T-cell (primary cell): ENCODE measurements at regions of chr2 and their contacts with region 1.

Region 1: GRCh38 chr2:201231781-201232466 is 28.4 kb upstream of the CASP8 start:
- DNase-seq: peak; percentile 75 to 97 (median 88)
- ATAC-seq: peak; percentile 53 to 56 (median 54)
- H3K4me3 ChIP-seq: no peak overlapping the region
- H3K4me3 Mint-ChIP-seq: peak overlapping the region; percentile 57 to 94 (median 89)
- H3K27ac ChIP-seq: peak overlapping the region; percentile 81
- H3K27ac Mint-ChIP-seq: peak overlapping the region; percentile 72 to 93
- H3K4me1 ChIP-seq: peaks cover 40 to 43% of the 10 kb centered on the region in 2 experiments
- H3K4me1 Mint-ChIP-seq: peaks cover 44 to 60% (median 56%) of the 10 kb centered on the region in 3 donors
- H3K27me3 ChIP-seq: no peaks in the 10 kb centered on the region
- H3K27me3 Mint-ChIP-seq: no peaks in the 10 kb centered on the region

Region 2: DNA sequence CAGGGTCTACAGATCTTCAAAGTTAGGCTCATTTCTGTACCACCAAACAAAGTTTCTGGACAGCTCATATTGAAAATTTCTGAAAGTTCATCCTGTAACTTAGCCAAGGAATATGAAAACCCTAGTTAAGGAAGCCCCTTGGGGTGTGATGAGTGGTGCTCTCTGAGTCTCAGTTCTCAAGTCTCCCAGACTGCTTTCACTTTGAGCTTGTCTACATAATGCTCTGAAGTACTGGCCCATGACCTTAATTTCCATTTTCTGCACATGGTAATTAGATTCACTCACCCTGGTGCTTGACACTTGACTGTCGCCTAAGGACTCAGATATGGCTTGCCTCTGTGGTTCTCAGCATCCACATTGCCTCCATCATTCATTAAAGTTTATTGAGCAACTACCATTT is 1722.5 kb before region 1 on chr2:
- CTCF ChIA-PET with region 1: no interaction called
- POLR2A ChIA-PET with region 1: no interaction called
- DNase-seq: no peak
- ATAC-seq: no peak
- H3K4me3 ChIP-seq: no peak overlapping the region
- H3K4me3 Mint-ChIP-seq: no peak overlapping the region
- H3K27ac ChIP-seq: no peak overlapping the region
- H3K27ac Mint-ChIP-seq: no peak overlapping the region
- H3K4me1 ChIP-seq: no peaks in the 10 kb centered on the region
- H3K4me1 Mint-ChIP-seq: no peaks in the 10 kb centered on the region
- H3K27me3 ChIP-seq: peaks cover 0 to 7% of the 10 kb centered on the region in 2 experiments
- H3K27me3 Mint-ChIP-seq: peaks cover 14 to 35% of the 10 kb centered on the region in 2 donors

Region 3: GRCh38 chr2:200901459-200902072 is 330.4 kb before region 1 on chr2:
- CTCF ChIA-PET with region 1: interaction called in 1 of 2 experiments, 23 read pairs
- POLR2A ChIA-PET with region 1: no interaction called
- DNase-seq: peak; percentile 34 to 89 (median 69)
- ATAC-seq: peak; percentile 100
- H3K4me3 ChIP-seq: no peak overlapping the region
- H3K4me3 Mint-ChIP-seq: no peak overlapping the region
- H3K27ac ChIP-seq: peak overlapping the region; percentile 34
- H3K27ac Mint-ChIP-seq: peak overlapping the region; percentile 4 to 43
- H3K4me1 ChIP-seq: peaks cover 0 to 2% of the 10 kb centered on the region in 2 experiments
- H3K4me1 Mint-ChIP-seq: peaks cover 7 to 8% (median 7%) of the 10 kb centered on the region in 3 donors
- H3K27me3 ChIP-seq: no peaks in the 10 kb centered on the region
- H3K27me3 Mint-ChIP-seq: no peaks in the 10 kb centered on the region

Region 4: GRCh38 chr2:201118121-201118960 is 113.6 kb before region 1 on chr2:
- CTCF ChIA-PET with region 1: interaction called, 7 to 15 read pairs
- POLR2A ChIA-PET with region 1: interaction called in 1 of 2 experiments, 4 read pairs
- DNase-seq: peak; percentile 65 to 92 (median 84)
- ATAC-seq: peak; percentile 41 to 60 (median 50)
- H3K4me3 ChIP-seq: peak overlapping the region; percentile 84 to 92
- H3K4me3 Mint-ChIP-seq: peak overlapping the region; percentile 97 to 98 (median 98)
- H3K27ac ChIP-seq: peak overlapping the region; percentile 97
- H3K27ac Mint-ChIP-seq: peak overlapping the region; percentile 99
- H3K4me1 ChIP-seq: peaks cover 38 to 50% of the 10 kb centered on the region in 2 experiments
- H3K4me1 Mint-ChIP-seq: peaks cover 57 to 82% (median 58%) of the 10 kb centered on the region in 3 donors
- H3K27me3 ChIP-seq: no peaks in the 10 kb centered on the region
- H3K27me3 Mint-ChIP-seq: no peaks in the 10 kb centered on the region

Region 5: GRCh38 chr2:201194097-201194496 is 37.8 kb before region 1 on chr2:
- CTCF ChIA-PET with region 1: interaction called, 10 to 68 read pairs
- POLR2A ChIA-PET with region 1: interaction called in 1 of 2 experiments, 3 read pairs
- DNase-seq: peak in 1 of 35 experiments; percentile 48
- ATAC-seq: peak; percentile 44 to 61 (median 60)
- H3K4me3 ChIP-seq: no peak overlapping the region
- H3K4me3 Mint-ChIP-seq: peak overlapping the region; percentile 48 to 74 (median 67)
- H3K27ac ChIP-seq: peak overlapping the region; percentile 73
- H3K27ac Mint-ChIP-seq: peak overlapping the region; percentile 91 to 93
- H3K4me1 ChIP-seq: peaks cover 54 to 62% of the 10 kb centered on the region in 2 experiments
- H3K4me1 Mint-ChIP-seq: peaks cover 74 to 82% (median 81%) of the 10 kb centered on the region in 3 donors
- H3K27me3 ChIP-seq: no peaks in the 10 kb centered on the region
- H3K27me3 Mint-ChIP-seq: no peaks in the 10 kb centered on the region

Region 6: GRCh38 chr2:201270293-201271001 is 38.5 kb after region 1 on chr2:
- CTCF ChIA-PET with region 1: interaction called, 9 to 89 read pairs
- POLR2A ChIA-PET with region 1: interaction called in 1 of 2 experiments, 9 read pairs
- DNase-seq: no peak
- ATAC-seq: no peak
- H3K4me3 ChIP-seq: no peak overlapping the region
- H3K4me3 Mint-ChIP-seq: peak overlapping the region; percentile 11 to 46 (median 17)
- H3K27ac ChIP-seq: peak overlapping the region; percentile 2
- H3K27ac Mint-ChIP-seq: peak overlapping the region; percentile 64 to 78
- H3K4me1 ChIP-seq: peaks cover 8 to 66% of the 10 kb centered on the region in 2 experiments
- H3K4me1 Mint-ChIP-seq: peaks cover 86 to 87% (median 87%) of the 10 kb centered on the region in 3 donors
- H3K27me3 ChIP-seq: no peaks in the 10 kb centered on the region
- H3K27me3 Mint-ChIP-seq: no peaks in the 10 kb centered on the region

Region 7: DNA sequence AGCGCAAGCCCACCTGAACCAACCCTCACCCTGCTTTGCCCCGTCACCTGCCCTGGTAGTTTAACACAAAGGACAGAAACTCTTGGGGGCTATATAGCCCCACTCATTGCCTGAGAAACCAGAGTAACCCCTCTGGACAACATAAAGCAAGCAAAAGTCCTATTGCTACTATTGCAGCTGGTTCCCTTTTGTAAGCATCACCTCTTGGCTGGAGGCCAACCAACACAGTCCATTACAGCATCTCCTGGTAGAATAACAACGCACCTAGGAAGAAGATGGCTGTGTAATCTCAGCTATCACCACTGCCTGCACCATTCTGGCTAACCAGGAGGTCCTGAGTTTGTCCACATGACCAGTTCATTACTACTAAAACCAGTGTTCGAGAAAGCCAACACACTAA is 88.8 kb after region 1 on chr2:
- CTCF ChIA-PET with region 1: no interaction called
- POLR2A ChIA-PET with region 1: no interaction called
- DNase-seq: no peak
- ATAC-seq: no peak
- H3K4me3 ChIP-seq: no peak overlapping the region
- H3K4me3 Mint-ChIP-seq: no peak overlapping the region
- H3K27ac ChIP-seq: no peak overlapping the region
- H3K27ac Mint-ChIP-seq: no peak overlapping the region
- H3K4me1 ChIP-seq: no peaks in the 10 kb centered on the region
- H3K4me1 Mint-ChIP-seq: no peaks in the 10 kb centered on the region
- H3K27me3 ChIP-seq: no peaks in the 10 kb centered on the region
- H3K27me3 Mint-ChIP-seq: no peaks in the 10 kb centered on the region

Region 8: DNA sequence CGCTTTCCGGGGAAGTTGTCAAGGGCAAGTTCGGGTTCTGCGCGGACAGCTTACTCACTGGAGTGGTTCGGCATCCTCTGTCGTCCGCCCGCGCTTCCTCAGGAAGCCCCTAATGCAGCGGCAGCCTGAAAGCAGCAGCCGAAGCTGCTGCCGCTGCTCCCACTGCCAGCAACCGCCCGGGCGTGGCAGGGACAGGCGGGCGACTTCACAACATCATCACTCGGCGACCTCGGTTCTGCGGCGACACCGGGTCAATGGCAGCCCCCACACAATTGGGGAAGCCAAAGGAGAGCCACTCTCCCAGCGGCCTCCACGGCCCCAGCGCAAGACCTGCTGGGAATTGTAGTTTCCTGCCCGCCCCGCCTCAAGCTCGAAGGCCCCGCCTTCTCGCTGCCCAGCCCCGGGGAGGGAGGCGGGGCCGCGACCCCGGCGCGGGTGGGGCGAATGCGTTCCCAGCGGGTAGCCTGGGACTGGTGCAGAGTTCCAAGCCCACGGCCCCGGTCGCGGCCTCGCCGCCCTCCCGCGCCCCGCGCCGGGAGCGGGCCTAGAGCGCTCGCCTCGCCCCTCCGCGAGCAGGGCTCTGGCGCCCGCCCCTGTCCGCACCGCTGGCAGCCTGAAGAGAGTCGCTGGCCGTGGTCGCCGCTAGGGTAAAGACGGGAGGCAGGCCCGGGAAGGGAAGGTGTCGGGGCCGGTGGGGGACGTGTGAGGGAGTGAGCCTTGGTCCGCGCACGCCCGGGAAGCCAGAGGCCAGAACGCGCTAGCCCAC is 219.6 kb after region 1 on chr2 and contains the starts of genes STRADB and TRAK2:
- CTCF ChIA-PET with region 1: interaction called, 3 to 16 read pairs
- POLR2A ChIA-PET with region 1: interaction called in 1 of 2 experiments, 3 read pairs
- DNase-seq: peak; percentile 84 to 97 (median 93)
- ATAC-seq: peak; percentile 88 to 94 (median 90)
- H3K4me3 ChIP-seq: peak within 1 kb of the TSS; percentile 86 to 95
- H3K4me3 Mint-ChIP-seq: peak within 1 kb of the TSS; percentile 96 to 99 (median 96)
- H3K27ac ChIP-seq: peak within 1 kb of the TSS; percentile 79
- H3K27ac Mint-ChIP-seq: peak within 1 kb of the TSS; percentile 92 to 95
- H3K4me1 ChIP-seq: peaks cover 32 to 33% of the 10 kb centered on the region in 2 experiments
- H3K4me1 Mint-ChIP-seq: peaks cover 32 to 57% (median 52%) of the 10 kb centered on the region in 3 donors
- H3K27me3 ChIP-seq: no peaks in the 10 kb centered on the region
- H3K27me3 Mint-ChIP-seq: no peaks in the 10 kb centered on the region
- total RNA-seq, gene STRADB: 10.2 to 24.2 (median 18.0) TPM
- total RNA-seq, gene TRAK2: 39.5 to 47.9 (median 43.4) TPM